H1 (cell line): ENCODE measurements at regions of chr9 and their contacts with region 1.

Region 1: GRCh38 chr9:17519761-17520160 is 59.1 kb upstream of the SH3GL2 start:
- DNase-seq: no peak
- H3K4me3 ChIP-seq: no peak overlapping the region
- H3K27ac ChIP-seq: no peak overlapping the region
- H3K4me1 ChIP-seq: no peaks in the 10 kb centered on the region; a peak in 1 of 7 replicates
- H3K27me3 ChIP-seq: no peaks in the 10 kb centered on the region
- CTCF ChIP-seq: no peak
- EP300 ChIP-seq: no peak
- POLR2A ChIP-seq: no peak
- RAD21 ChIP-seq: no peak

Region 2: GRCh38 chr9:17802249-17802857 is 282.6 kb after region 1 on chr9:
- CTCF ChIA-PET with region 1: interaction called, 46 read pairs
- POLR2A ChIA-PET with region 1: interaction called, 5 read pairs
- DNase-seq: no peak
- H3K4me3 ChIP-seq: no peak overlapping the region
- H3K27ac ChIP-seq: no peak overlapping the region
- H3K4me1 ChIP-seq: no peaks in the 10 kb centered on the region
- H3K27me3 ChIP-seq: no peaks in the 10 kb centered on the region
- CTCF ChIP-seq: peak in 2 of 3 experiments; percentile 50 to 57; a peak in 2 of 4 replicates
- EP300 ChIP-seq: no peak
- POLR2A ChIP-seq: no peak
- RAD21 ChIP-seq: peak; percentile 62 to 67